ENCODE measurements at regions of chr2 and their contacts with region 1.

Region 1: GRCh38 chr2:193584522-193584938 is 1389.8 kb upstream of the TMEFF2 start:
- DNase-seq: no peak
- ATAC-seq: peak; percentile 78
- H3K4me3 Mint-ChIP-seq: no peak overlapping the region
- H3K27ac Mint-ChIP-seq: peak overlapping the region; percentile 24; the same call in 1 of the 2 replicates
- H3K4me1 Mint-ChIP-seq: peaks cover 9% of the 10 kb centered on the region
- H3K27me3 Mint-ChIP-seq: no peaks in the 10 kb centered on the region
- CTCF ChIP-seq: peak; percentile 14; the same call in 1 of the 2 replicates

Region 2: GRCh38 chr2:193228276-193228675 is 356.3 kb before region 1 on chr2:
- CTCF ChIA-PET with region 1: interaction called, 12 read pairs
- POLR2A ChIA-PET with region 1: no interaction called
- DNase-seq: no peak
- ATAC-seq: peak; percentile 91
- H3K4me3 Mint-ChIP-seq: no peak overlapping the region
- H3K27ac Mint-ChIP-seq: no peak overlapping the region
- H3K4me1 Mint-ChIP-seq: no peaks in the 10 kb centered on the region
- H3K27me3 Mint-ChIP-seq: no peaks in the 10 kb centered on the region
- CTCF ChIP-seq: no peak

Region 3: GRCh38 chr2:193240752-193241151 is 343.8 kb before region 1 on chr2:
- CTCF ChIA-PET with region 1: interaction called, 11 read pairs
- POLR2A ChIA-PET with region 1: no interaction called
- DNase-seq: no peak
- ATAC-seq: peak; percentile 78
- H3K4me3 Mint-ChIP-seq: no peak overlapping the region
- H3K27ac Mint-ChIP-seq: no peak overlapping the region
- H3K4me1 Mint-ChIP-seq: no peaks in the 10 kb centered on the region
- H3K27me3 Mint-ChIP-seq: no peaks in the 10 kb centered on the region
- CTCF ChIP-seq: peak; percentile 37

Region 4: DNA sequence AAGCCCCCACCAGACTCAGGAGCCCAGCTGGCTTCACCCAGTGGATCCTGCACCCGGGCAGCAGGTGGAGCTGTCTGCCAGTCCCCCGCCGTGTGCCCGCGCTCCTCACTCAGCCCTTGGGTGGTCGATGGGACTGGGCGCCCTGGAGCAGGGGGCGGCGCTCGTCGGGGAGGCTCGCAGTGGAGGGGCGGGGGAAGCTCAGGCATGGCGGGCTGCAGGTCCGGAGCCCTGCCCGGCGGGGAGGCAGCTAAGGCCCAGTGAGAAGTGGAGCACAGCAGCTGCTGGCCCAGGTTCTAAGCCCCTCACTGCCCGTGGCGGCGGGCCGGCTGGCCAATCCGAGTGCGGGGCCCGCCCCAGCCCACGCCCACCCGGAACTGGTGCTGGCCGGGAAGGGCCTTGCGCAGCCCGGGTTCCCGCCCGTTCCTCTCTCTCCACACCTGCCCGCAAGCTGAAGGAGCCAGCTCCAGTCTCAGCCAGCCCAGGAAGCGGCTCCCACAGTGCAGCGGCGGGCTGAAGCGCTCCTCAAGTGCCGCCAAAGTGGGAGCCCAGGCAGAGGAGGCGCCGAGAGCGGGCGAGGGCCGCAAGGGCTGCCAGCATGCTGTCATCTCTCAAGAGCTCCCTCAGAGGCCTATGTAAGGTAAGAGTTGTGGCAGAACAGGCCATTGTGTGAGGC is 82.0 kb before region 1 on chr2:
- CTCF ChIA-PET with region 1: interaction called, 71 read pairs
- POLR2A ChIA-PET with region 1: interaction called, 3 read pairs
- DNase-seq: peak; percentile 90
- ATAC-seq: peak; percentile 97
- H3K4me3 Mint-ChIP-seq: peak overlapping the region; percentile 78
- H3K27ac Mint-ChIP-seq: peak overlapping the region; percentile 89
- H3K4me1 Mint-ChIP-seq: peaks cover 27% of the 10 kb centered on the region
- H3K27me3 Mint-ChIP-seq: no peaks in the 10 kb centered on the region
- CTCF ChIP-seq: no peak

Region 5: GRCh38 chr2:193566276-193566675 is 18.3 kb before region 1 on chr2:
- CTCF ChIA-PET with region 1: interaction called, 11 read pairs
- POLR2A ChIA-PET with region 1: no interaction called
- DNase-seq: no peak
- ATAC-seq: no peak
- H3K4me3 Mint-ChIP-seq: no peak overlapping the region
- H3K27ac Mint-ChIP-seq: no peak overlapping the region
- H3K4me1 Mint-ChIP-seq: 0 out of 2 replicates have a peak, but pooled peaks cover 4% of the 10 kb centered on the region
- H3K27me3 Mint-ChIP-seq: no peaks in the 10 kb centered on the region
- CTCF ChIP-seq: no peak